AG04449 (cell line): ENCODE measurements at regions of chr3 and their contacts with region 1.

Region 1: DNA sequence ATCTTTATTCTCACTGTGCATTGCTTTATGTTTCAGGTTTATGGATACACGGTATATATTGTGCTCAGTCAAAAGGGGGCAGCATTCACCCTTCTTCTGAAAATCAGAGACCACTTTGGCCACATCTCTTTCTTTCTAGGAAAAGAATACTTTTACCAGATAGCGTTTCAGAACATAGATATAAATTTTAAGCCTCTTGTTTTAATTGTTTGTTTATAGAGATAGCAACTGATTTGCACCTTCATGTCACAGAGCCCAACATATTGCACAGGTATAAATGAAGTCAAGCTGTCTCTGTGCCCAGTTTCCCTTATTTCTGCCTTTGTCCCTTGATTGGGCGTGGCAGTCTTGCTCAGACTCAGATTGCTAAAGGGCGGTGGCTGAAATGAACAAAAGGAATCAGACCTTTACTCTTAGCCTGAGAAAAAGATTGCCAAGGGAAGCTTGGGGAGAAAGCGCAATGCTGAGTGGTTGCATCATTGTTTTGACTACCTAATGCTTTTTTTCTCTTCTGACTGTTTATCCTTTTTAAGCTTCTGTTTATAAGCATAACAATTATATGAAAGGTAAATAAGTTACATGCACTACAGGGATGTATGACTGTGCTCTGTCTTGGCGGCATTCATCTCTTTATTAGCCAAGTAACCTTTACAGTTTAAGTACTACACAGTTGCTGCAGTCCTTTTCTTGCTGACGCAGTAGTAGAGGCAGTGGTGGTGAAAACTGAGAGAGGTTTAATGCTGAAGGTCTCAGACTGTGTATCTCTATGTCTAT is 70.8 kb upstream of the ZBTB20 start:
- DNase-seq: no peak
- H3K4me3 ChIP-seq: no peak overlapping the region
- CTCF ChIP-seq: peak; percentile 58

Region 2: DNA sequence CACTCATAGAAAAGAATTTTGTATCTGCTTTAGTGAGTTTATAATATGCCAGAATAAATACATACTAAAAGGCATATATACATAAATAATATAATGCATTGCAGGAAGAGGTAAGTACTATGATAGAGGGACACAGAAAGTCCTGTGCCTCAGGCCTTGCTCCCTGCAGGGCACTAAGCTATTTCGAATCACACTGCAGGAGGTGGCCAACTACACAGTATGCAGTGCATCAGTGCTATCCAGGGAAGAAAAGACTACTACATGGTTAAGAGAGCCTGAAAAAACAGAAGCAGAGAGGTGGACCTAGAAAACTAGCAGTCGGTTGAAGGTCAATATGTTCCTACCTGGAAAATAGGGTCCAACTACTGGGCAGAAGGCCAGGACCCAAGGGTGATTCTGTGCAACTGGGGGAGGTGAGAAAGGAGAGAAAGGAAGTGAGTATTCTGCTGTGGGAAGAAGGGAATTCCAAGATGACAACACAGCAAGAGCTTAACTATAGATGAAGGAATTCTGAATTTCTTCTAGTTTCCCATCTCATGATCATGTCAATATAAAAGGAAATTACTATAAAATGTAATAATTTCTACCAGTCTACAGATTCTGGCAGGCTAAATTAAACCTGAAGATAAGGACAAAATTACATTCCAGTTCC is 288.8 kb before region 1 on chr3:
- CTCF ChIA-PET with region 1: no interaction called
- POLR2A ChIA-PET with region 1: no interaction called
- DNase-seq: no peak
- H3K4me3 ChIP-seq: no peak overlapping the region
- CTCF ChIP-seq: no peak

Region 3: DNA sequence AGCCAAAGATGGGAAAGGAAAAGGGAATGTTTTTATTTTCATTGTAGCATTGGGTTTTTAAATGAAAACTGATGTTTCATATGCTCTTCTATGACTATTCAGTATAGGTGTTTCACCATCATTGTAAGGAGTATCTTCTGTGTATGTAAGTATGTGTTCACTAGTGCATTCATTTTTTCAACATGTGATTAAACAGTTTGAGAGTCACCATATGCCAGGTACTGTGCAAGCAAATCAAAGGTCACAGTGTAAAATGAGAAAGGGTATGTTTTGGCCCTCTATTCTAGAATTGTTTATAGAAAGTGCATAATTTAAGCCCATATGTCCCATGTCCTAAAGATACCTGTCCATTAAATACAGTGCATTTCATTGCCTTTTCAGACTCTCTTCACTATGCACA is 277.9 kb before region 1 on chr3:
- CTCF ChIA-PET with region 1: no interaction called
- POLR2A ChIA-PET with region 1: no interaction called
- DNase-seq: no peak
- H3K4me3 ChIP-seq: no peak overlapping the region
- CTCF ChIP-seq: no peak

Region 4: GRCh38 chr3:114994554-114995341 is 223.1 kb before region 1 on chr3:
- CTCF ChIA-PET with region 1: no interaction called
- POLR2A ChIA-PET with region 1: no interaction called
- DNase-seq: no peak
- H3K4me3 ChIP-seq: no peak overlapping the region
- CTCF ChIP-seq: no peak

Region 5: GRCh38 chr3:115187149-115187757 is 30.6 kb before region 1 on chr3:
- CTCF ChIA-PET with region 1: no interaction called
- POLR2A ChIA-PET with region 1: no interaction called
- DNase-seq: no peak
- H3K4me3 ChIP-seq: no peak overlapping the region
- CTCF ChIP-seq: no peak

Region 6: DNA sequence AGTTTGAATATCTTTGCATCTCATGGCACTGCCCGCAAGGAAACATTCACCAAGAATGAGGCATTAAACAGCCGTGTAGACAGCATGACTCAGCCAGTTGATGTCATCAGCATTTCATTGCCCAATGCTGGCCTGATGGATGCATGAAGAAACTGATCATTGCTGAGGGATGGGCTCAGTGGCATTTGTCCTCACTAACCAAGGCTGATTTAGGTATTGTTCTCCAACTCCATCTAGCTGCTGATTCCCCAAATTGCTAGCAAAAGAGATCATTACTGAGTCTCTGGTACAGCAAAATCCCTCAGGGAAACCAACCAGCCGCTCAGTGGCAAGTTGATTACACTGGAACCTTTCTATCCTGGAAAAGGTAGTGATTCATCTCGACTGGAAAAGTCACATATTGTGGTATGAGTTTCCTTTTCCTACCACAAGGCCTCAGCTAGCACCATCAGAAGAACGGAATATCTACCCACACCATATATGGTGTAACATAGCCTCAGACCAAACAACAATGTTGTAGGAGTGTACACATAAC is 219.0 kb after region 1 on chr3:
- CTCF ChIA-PET with region 1: interaction called, 55 read pairs
- POLR2A ChIA-PET with region 1: no interaction called
- DNase-seq: peak; percentile 92
- H3K4me3 ChIP-seq: no peak overlapping the region
- CTCF ChIP-seq: peak; percentile 48

Region 7: GRCh38 chr3:115698851-115699591 is 481.2 kb after region 1 on chr3:
- CTCF ChIA-PET with region 1: interaction called, 56 read pairs
- POLR2A ChIA-PET with region 1: no interaction called
- DNase-seq: no peak
- H3K4me3 ChIP-seq: no peak overlapping the region
- CTCF ChIP-seq: no peak

Region 8: DNA sequence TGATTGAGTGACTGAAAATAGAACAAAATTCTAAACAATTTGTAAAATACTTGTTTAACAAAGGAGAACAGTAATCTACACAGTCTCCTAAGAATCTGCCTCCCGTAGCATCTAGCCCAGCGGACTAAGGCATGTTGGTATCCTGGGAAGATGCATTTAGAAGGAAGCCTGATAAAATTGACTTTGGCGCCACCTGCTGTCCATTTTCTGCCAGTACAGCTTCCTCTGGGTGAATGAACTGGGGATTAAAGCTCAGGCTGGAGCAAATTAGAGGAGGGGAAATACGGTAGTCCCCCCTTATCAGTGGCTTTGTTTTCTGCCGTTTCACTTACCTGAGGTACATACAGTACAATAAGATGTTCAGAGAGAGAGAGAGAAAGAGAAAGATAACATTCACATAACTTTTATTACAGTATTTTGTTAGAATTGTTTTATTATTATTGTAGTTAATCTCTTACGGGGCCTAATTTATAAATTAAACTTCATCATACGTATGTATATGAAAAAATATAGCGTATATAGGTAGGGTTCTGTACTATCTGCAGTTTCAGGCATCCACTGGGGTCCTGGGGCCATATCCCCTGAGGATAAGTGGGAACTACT is 597.0 kb after region 1 on chr3:
- CTCF ChIA-PET with region 1: interaction called, 43 read pairs
- POLR2A ChIA-PET with region 1: no interaction called
- DNase-seq: no peak
- H3K4me3 ChIP-seq: no peak overlapping the region
- CTCF ChIP-seq: peak; percentile 75